Activated naive CD4-positive, alpha-beta T cell treated with anti-CD3 and anti-CD28 coated beads for 36 hours (primary cell): ENCODE measurements at regions of chr5 and their contacts with region 1.

Region 1: GRCh38 chr5:113132564-113132963 is 156.0 kb downstream of the DCP2 start:
- DNase-seq: no peak
- H3K4me3 Mint-ChIP-seq: no peak overlapping the region
- H3K27ac Mint-ChIP-seq: no peak overlapping the region
- H3K4me1 Mint-ChIP-seq: no peaks in the 10 kb centered on the region
- H3K27me3 Mint-ChIP-seq: no peaks in the 10 kb centered on the region

Region 2: DNA sequence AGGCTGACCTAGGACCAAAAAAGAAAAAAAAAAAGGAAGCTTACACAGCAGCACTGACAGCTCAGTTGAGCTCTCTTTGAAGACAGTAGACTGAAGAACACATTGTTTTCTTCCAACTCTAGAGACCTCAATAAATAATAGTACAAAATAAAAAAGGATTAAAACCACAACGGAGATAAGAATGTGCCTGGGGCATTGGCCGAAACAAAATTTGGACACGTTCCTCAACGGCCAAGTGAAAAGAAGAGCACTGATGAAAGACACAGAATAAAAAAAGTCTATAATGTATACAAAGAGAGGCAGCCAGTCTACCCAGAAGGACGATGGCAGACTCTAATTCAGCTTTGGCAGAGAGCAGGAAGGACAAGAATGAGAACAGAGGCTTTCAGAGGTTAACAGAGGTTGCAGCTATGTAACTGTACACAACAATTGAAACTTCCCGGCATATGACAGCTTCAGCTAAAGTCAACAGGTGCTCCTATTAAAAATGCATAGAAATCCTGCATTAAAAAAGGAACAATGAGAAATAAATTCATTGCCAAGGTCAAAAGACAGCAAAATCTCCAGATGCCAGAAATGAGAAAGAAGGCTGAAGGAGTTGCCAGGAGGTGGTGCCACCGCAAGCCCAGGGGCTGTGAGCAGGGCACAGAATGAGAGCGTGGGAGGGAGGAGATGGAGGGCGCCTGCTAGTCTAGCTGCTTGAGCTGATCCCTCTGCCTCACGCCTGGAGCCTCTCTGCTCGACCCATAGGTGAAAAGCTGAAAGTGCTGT is 42.0 kb before region 1 on chr5:
- CTCF ChIA-PET with region 1: no interaction called
- intact Hi-C with region 1: loop called (anchors 2 kb)
- DNase-seq: peak; percentile 25
- H3K4me3 Mint-ChIP-seq: no peak overlapping the region
- H3K27ac Mint-ChIP-seq: no peak overlapping the region
- H3K4me1 Mint-ChIP-seq: peaks cover 6% of the 10 kb centered on the region
- H3K27me3 Mint-ChIP-seq: no peaks in the 10 kb centered on the region

Region 3: GRCh38 chr5:113224605-113225065 is 92.1 kb after region 1 on chr5:
- CTCF ChIA-PET with region 1: no interaction called
- intact Hi-C with region 1: no loop called
- DNase-seq: no peak
- H3K4me3 Mint-ChIP-seq: no peak overlapping the region
- H3K27ac Mint-ChIP-seq: no peak overlapping the region
- H3K4me1 Mint-ChIP-seq: no peaks in the 10 kb centered on the region
- H3K27me3 Mint-ChIP-seq: peaks cover 7% of the 10 kb centered on the region

Region 4: GRCh38 chr5:113235884-113236283 is 103.3 kb after region 1 on chr5:
- CTCF ChIA-PET with region 1: no interaction called
- intact Hi-C with region 1: no loop called
- DNase-seq: no peak
- H3K4me3 Mint-ChIP-seq: no peak overlapping the region
- H3K27ac Mint-ChIP-seq: no peak overlapping the region
- H3K4me1 Mint-ChIP-seq: no peaks in the 10 kb centered on the region
- H3K27me3 Mint-ChIP-seq: peaks cover 9% of the 10 kb centered on the region